ENCODE measurements at regions of chr2 and their contacts with region 1.

Region 1: GRCh38 chr2:169798718-169799592 is at the start of gene SSB:
- DNase-seq: peak; percentile 86 to 96 (median 89)
- H3K4me3 ChIP-seq: peak within 1 kb of the TSS; percentile 81
- H3K4me3 Mint-ChIP-seq: peak within 1 kb of the TSS; percentile 84 to 98 (median 91)
- H3K27ac ChIP-seq: peak within 1 kb of the TSS; percentile 96
- H3K27ac Mint-ChIP-seq: peak within 1 kb of the TSS; percentile 89 to 99 (median 98)
- H3K4me1 ChIP-seq: peaks cover 27% of the 10 kb centered on the region
- H3K4me1 Mint-ChIP-seq: peaks cover 34 to 52% (median 46%) of the 10 kb centered on the region in 3 donors
- H3K27me3 ChIP-seq: no peaks in the 10 kb centered on the region
- H3K27me3 Mint-ChIP-seq: no peaks in the 10 kb centered on the region
- total RNA-seq, gene SSB: 101 to 113 TPM

Region 2: DNA sequence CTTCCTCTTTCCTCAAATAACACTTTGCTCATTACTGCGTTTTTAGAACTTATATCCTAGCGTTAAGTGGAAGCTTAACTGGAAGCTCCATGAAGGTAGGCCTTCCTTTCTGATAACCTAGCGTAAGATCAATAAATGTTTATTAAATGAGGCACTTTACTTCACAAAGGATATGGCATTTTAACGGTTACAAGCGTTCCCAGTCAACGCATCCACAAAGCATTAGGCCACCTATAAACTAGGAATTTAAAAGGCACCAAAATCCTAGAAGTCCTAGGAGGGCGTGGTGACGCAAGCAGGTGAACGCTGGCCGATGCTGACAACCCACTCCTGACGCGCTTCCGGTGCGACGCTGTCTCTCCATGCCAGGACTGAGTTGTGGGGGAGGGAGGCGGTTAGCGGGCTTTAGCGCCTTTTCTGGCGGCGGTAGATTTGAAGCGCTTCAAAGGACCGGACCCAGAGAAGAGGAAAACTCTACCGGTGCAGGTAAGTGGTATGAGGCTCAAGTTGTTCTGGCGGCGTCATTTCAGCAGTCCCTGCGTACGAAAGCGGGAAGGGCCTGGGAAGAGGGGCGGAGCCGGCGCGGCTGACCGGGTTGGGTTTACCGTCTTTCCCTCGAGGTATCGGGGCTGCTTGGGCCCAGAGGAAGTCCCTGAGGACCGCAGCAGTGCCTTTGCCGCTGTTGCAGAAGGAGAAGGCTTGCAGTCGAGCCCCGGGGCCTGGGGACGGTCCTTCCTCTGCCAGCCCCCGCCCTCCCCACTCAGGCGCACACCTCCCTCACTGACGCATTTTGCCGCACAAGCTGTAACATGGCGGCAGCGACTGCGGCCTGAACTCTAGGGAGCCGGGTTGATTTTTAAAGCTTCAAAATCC is 214.7 kb before region 1 on chr2 and contains the start of gene PPIG:
- CTCF ChIA-PET with region 1: no interaction called
- POLR2A ChIA-PET with region 1: interaction called, 15 read pairs
- DNase-seq: peak; percentile 79 to 91 (median 86)
- H3K4me3 ChIP-seq: peak within 1 kb of the TSS; percentile 99
- H3K4me3 Mint-ChIP-seq: peak within 1 kb of the TSS; percentile 96 to 100 (median 99)
- H3K27ac ChIP-seq: peak within 1 kb of the TSS; percentile 99
- H3K27ac Mint-ChIP-seq: peak within 1 kb of the TSS; percentile 99 to 100 (median 100)
- H3K4me1 ChIP-seq: peaks cover 25% of the 10 kb centered on the region
- H3K4me1 Mint-ChIP-seq: peaks cover 33 to 48% (median 43%) of the 10 kb centered on the region in 3 donors
- H3K27me3 ChIP-seq: no peaks in the 10 kb centered on the region
- H3K27me3 Mint-ChIP-seq: no peaks in the 10 kb centered on the region
- total RNA-seq, gene PPIG: 60.7 to 65.7 TPM

Region 3: DNA sequence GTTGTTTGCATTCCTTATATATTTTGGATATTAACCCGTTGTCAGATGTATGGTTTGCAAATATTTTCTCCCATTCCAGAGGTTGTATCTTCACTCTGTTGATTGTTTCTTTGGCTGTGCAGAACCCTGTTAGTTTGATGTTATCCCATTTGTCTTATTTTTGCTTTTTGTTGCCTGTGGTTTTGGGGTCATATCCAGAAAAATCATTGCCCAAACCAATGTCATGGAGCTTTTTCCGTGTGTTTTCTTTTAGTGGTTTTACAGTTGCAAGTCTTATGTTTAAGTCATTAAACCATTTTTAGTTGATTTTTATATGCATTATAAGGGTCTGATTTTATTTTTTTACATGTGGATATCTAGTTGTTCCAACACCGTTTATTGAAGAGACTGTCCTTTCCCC is 179.0 kb before region 1 on chr2:
- CTCF ChIA-PET with region 1: no interaction called
- POLR2A ChIA-PET with region 1: no interaction called
- DNase-seq: no peak
- H3K4me3 ChIP-seq: no peak overlapping the region
- H3K4me3 Mint-ChIP-seq: no peak overlapping the region
- H3K27ac ChIP-seq: no peak overlapping the region
- H3K27ac Mint-ChIP-seq: peak overlapping the region in 2 of 8 donors; percentile 17 to 52
- H3K4me1 ChIP-seq: no peaks in the 10 kb centered on the region
- H3K4me1 Mint-ChIP-seq: peaks cover 43 to 56% (median 50%) of the 10 kb centered on the region in 3 donors
- H3K27me3 ChIP-seq: no peaks in the 10 kb centered on the region
- H3K27me3 Mint-ChIP-seq: no peaks in the 10 kb centered on the region

Region 4: GRCh38 chr2:169743549-169743948 is 55.4 kb before region 1 on chr2:
- CTCF ChIA-PET with region 1: no interaction called
- POLR2A ChIA-PET with region 1: no interaction called
- DNase-seq: no peak
- H3K4me3 ChIP-seq: no peak overlapping the region
- H3K4me3 Mint-ChIP-seq: no peak overlapping the region
- H3K27ac ChIP-seq: no peak overlapping the region
- H3K27ac Mint-ChIP-seq: no peak overlapping the region
- H3K4me1 ChIP-seq: no peaks in the 10 kb centered on the region
- H3K4me1 Mint-ChIP-seq: peaks cover 0 to 2% (median 1%) of the 10 kb centered on the region in 3 donors
- H3K27me3 ChIP-seq: no peaks in the 10 kb centered on the region
- H3K27me3 Mint-ChIP-seq: peaks cover 2 to 8% of the 10 kb centered on the region in 2 donors

Region 5: GRCh38 chr2:170005484-170006101 is 206.6 kb after region 1 on chr2:
- CTCF ChIA-PET with region 1: no interaction called
- POLR2A ChIA-PET with region 1: no interaction called
- DNase-seq: no peak
- H3K4me3 ChIP-seq: no peak overlapping the region
- H3K4me3 Mint-ChIP-seq: no peak overlapping the region
- H3K27ac ChIP-seq: no peak overlapping the region
- H3K27ac Mint-ChIP-seq: peak overlapping the region in 3 of 8 donors; percentile 12 to 51 (median 25)
- H3K4me1 ChIP-seq: no peaks in the 10 kb centered on the region
- H3K4me1 Mint-ChIP-seq: peaks cover 3 to 18% (median 10%) of the 10 kb centered on the region in 3 donors
- H3K27me3 ChIP-seq: no peaks in the 10 kb centered on the region
- H3K27me3 Mint-ChIP-seq: no peaks in the 10 kb centered on the region